Activated B cell treated with CpG ODN at 0.5 μM for 24 hours (primary cell): ENCODE measurements at regions of chr3 and their contacts with region 1.

Region 1: GRCh38 chr3:16600780-16601539 is 4.3 kb downstream of the DAZL start:
- DNase-seq: peak; percentile 54
- ATAC-seq: peak; percentile 61
- H3K4me3 Mint-ChIP-seq: no peak overlapping the region
- H3K27ac Mint-ChIP-seq: no peak overlapping the region
- H3K4me1 Mint-ChIP-seq: peaks cover 2% of the 10 kb centered on the region
- H3K27me3 Mint-ChIP-seq: peaks cover 5% of the 10 kb centered on the region
- CTCF ChIP-seq: no peak

Region 2: DNA sequence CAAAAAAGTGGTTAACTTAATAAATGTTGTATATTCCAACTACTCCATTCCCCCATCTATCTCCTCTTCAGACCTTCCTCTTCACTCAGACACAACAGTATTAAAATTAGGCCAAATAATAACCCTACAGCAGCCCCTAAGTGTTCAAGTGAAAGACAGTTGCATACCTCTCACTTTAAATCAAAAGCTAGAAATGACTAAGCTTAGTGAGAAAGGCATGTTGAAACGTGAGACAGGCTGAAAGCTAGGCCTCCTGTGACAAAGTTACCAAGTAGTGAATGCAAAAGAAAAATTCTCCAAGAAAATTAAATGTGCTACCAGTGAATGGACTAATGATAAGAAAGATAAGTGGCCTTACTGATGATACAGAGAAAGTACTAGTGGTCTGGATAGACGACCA is 874.9 kb before region 1 on chr3:
- CTCF ChIA-PET with region 1: no interaction called
- POLR2A ChIA-PET with region 1: no interaction called
- intact Hi-C with region 1: no loop called
- DNase-seq: no peak
- ATAC-seq: no peak
- H3K4me3 Mint-ChIP-seq: no peak overlapping the region
- H3K27ac Mint-ChIP-seq: no peak overlapping the region
- H3K4me1 Mint-ChIP-seq: no peaks in the 10 kb centered on the region
- H3K27me3 Mint-ChIP-seq: no peaks in the 10 kb centered on the region
- CTCF ChIP-seq: no peak

Region 3: DNA sequence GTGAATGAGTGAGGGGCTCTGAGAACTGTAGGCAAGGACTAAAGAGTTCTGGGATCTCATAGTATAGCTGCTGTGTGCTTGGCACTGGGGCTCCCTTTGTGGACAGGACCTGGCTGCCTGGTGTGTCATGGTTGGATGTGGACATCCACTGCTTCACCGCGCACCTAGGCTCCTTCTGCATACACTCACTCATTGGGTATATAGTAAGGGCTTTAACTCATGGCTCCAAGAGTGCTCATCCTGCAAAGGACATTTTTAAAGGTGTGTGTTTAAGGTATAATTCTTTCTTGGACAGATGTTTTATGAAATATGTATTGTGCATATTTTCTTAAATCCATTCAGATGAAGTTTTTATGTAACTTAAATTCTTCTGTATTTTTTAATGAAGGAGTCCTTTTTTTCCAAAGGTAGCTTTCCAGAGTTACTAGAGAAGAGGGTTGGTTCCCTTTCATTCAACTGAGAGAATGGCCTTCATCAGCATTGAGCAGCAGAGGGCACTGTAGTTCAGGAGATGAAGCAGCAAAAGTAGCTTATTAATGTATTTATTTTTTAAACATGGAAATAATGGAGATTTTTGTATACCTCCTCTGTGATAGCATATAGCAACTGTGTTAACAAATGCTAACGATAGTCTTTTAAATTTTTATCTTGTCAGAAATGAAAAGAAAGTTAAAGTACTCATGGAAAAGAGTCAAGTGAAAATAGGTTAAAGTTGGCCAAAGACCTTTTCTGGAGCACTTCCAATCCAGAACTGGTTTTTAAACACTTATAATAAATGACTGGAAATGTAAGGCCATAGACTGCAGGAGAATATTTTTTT is 310.7 kb before region 1 on chr3:
- CTCF ChIA-PET with region 1: interaction called, 11 read pairs
- POLR2A ChIA-PET with region 1: no interaction called
- intact Hi-C with region 1: loop called (anchors 1 kb)
- DNase-seq: no peak
- ATAC-seq: peak; percentile 49
- H3K4me3 Mint-ChIP-seq: no peak overlapping the region
- H3K27ac Mint-ChIP-seq: no peak overlapping the region
- H3K4me1 Mint-ChIP-seq: peaks cover 36% of the 10 kb centered on the region
- H3K27me3 Mint-ChIP-seq: no peaks in the 10 kb centered on the region
- CTCF ChIP-seq: peak; percentile 51

Region 4: DNA sequence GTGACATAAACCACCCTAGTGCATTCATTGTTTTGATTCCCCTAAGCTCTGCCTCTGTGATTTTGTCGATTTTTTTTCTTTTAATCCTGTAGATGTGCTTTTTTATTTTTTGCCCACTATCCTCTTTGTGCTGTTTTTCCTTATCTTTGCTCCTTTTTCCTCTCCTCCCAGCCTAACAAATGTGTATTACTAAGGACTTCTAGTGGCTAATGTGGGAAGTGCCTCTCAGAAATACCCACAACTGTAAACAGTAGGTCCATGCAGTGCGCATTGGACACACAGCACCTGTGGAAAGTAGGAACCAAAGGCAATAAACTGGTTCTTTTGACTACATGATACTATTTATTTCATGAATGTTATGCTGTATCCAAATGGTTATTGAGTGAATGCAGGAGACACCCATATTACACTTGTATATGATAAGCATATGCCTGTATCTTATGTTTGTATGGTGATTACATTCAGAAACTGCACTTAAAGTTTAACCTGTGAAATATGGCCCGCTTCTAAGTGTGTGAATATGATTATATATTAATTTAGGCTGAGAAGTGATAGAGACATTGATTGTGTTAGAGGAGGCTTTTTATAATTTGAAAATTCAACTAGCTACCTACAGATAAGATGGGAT is 431.6 kb after region 1 on chr3:
- CTCF ChIA-PET with region 1: interaction called, 6 read pairs
- POLR2A ChIA-PET with region 1: no interaction called
- intact Hi-C with region 1: loop called (anchors 5 kb)
- DNase-seq: no peak
- ATAC-seq: peak; percentile 31
- H3K4me3 Mint-ChIP-seq: no peak overlapping the region
- H3K27ac Mint-ChIP-seq: no peak overlapping the region
- H3K4me1 Mint-ChIP-seq: peaks cover 40% of the 10 kb centered on the region
- H3K27me3 Mint-ChIP-seq: no peaks in the 10 kb centered on the region
- CTCF ChIP-seq: no peak

Region 5: DNA sequence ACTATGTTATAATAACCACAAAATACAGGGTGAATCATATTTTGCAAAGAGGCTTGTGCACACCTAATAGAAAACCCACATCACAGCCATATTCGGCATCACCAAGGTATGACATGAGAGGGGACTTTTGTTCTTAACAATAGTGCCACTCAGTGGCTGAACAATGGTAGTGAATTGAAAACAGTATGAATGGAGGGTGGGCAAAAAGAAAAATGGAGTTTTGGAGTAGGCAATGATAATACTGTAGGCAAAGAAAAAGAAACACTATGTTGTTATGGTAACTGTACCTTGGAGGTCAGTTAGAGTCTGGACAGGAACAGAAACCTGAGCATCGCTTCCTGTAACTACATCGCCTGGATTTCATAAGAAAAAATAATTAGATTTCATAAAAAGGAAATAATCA is 632.4 kb after region 1 on chr3:
- CTCF ChIA-PET with region 1: interaction called, 62 read pairs
- POLR2A ChIA-PET with region 1: no interaction called
- intact Hi-C with region 1: loop called (anchors 1 kb)
- DNase-seq: no peak
- ATAC-seq: peak; percentile 98
- H3K4me3 Mint-ChIP-seq: no peak overlapping the region
- H3K27ac Mint-ChIP-seq: no peak overlapping the region
- H3K4me1 Mint-ChIP-seq: peaks cover 19% of the 10 kb centered on the region
- H3K27me3 Mint-ChIP-seq: no peaks in the 10 kb centered on the region
- CTCF ChIP-seq: no peak

Region 6: DNA sequence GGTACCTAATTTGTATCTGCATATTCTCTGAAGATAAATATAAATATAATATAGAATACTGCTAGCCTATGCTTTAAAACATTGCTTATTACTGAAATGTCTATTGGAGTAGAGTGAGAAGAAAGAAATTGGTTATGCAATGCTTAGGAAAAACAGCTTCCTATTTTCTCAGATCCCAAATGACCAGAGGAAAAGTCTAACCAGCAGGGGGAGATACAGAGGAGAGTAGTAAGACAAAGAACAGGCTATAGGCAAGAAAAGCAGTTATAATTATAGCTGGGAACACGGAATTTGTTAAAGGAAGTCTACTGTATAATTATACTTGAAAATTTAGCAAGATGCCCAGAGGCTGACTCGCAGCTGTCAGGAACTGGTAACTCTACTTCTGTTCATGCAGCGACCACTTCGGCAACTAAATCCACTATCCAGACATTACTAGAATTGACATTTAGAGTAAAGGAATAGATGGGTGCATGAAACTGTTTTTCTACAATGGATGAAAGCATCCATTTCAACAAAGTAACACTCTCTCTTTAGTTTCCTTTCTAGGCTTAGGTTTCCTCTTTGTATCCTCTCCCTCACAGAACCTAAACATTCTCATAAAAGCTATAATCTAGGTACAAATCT is 1044.2 kb after region 1 on chr3:
- CTCF ChIA-PET with region 1: no interaction called
- POLR2A ChIA-PET with region 1: no interaction called
- intact Hi-C with region 1: loop called (anchors 10 kb)
- DNase-seq: no peak
- ATAC-seq: no peak
- H3K4me3 Mint-ChIP-seq: no peak overlapping the region
- H3K27ac Mint-ChIP-seq: no peak overlapping the region
- H3K4me1 Mint-ChIP-seq: peaks cover 9% of the 10 kb centered on the region
- H3K27me3 Mint-ChIP-seq: no peaks in the 10 kb centered on the region
- CTCF ChIP-seq: peak; percentile 35

Region 7: GRCh38 chr3:18295171-18295920 is 1694.4 kb after region 1 on chr3:
- CTCF ChIA-PET with region 1: no interaction called
- POLR2A ChIA-PET with region 1: no interaction called
- intact Hi-C with region 1: loop called (anchors 2 kb)
- DNase-seq: peak; percentile 29
- ATAC-seq: peak; percentile 77
- H3K4me3 Mint-ChIP-seq: no peak overlapping the region
- H3K27ac Mint-ChIP-seq: no peak overlapping the region
- H3K4me1 Mint-ChIP-seq: peaks cover 5% of the 10 kb centered on the region
- H3K27me3 Mint-ChIP-seq: no peaks in the 10 kb centered on the region
- CTCF ChIP-seq: peak; percentile 42